ENCODE measurements at regions of chr11 and their contacts with region 1.

Region 1: GRCh38 chr11:62081378-62082291 is 42.2 kb upstream of the INCENP start:
- DNase-seq: peak; percentile 74
- H3K4me3 ChIP-seq: no peak overlapping the region
- H3K27ac ChIP-seq: no peak overlapping the region
- H3K4me1 ChIP-seq: peaks cover 6% of the 10 kb centered on the region
- H3K27me3 ChIP-seq: no peaks in the 10 kb centered on the region
- CTCF ChIP-seq: peak; percentile 97

Region 2: GRCh38 chr11:61899146-61899841 is 182.3 kb before region 1 on chr11:
- CTCF ChIA-PET with region 1: interaction called, 82 read pairs
- POLR2A ChIA-PET with region 1: no interaction called
- intact Hi-C with region 1: loop called (anchors 1 kb)
- DNase-seq: peak; percentile 91
- H3K4me3 ChIP-seq: no peak overlapping the region
- H3K27ac ChIP-seq: peak overlapping the region; percentile 48
- H3K4me1 ChIP-seq: peaks cover 5% of the 10 kb centered on the region
- H3K27me3 ChIP-seq: no peaks in the 10 kb centered on the region
- CTCF ChIP-seq: peak; percentile 100

Region 3: DNA sequence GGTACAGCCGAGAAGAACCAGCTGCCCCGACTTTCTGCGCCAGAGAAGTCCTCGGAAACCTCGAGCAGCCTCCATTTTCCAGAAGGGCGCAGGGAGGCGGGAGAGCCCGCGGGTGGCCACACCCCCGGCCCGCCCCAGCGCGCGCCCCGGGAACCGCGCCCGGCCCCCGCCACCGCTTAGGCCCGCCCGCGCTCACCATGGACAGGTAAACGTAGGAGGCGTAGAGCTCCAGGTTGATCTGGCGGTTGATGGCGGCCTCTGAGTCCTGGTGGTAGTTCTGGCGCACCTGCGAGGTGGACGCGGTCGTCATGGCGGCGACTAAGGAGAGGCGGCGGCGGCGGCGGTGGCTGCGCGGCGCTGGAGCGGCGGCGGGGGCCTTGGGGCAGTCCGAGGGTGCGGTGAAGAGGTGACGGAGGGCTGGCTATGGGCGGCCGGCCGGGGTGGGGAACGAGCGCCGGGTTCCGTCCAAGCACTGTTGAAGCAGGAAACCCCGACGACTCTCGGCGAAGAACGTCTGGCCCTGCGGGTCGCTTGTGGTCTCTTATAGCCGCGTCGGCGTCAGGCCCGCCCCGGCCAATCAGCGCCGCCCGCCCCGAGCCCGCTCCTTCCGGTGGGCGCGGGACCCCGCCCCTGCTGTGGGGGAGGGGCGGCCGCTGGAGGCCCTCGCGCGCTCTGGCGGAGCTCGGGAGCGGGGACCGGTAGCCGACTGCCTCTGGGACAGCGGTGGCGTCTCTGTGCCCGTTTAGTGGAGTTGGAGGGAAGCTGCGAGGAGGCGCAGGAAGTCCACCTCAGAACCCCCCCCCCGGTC is 114.3 kb before region 1 on chr11 and contains the start of gene FTH1:
- CTCF ChIA-PET with region 1: interaction called, 6 read pairs
- POLR2A ChIA-PET with region 1: no interaction called
- intact Hi-C with region 1: loop called (anchors 5 kb)
- DNase-seq: peak; percentile 96
- H3K4me3 ChIP-seq: peak within 1 kb of the TSS; percentile 90
- H3K27ac ChIP-seq: peak within 1 kb of the TSS; percentile 98
- H3K4me1 ChIP-seq: peaks cover 52% of the 10 kb centered on the region
- H3K27me3 ChIP-seq: no peaks in the 10 kb centered on the region
- CTCF ChIP-seq: no peak
- total RNA-seq, gene FTH1: 2,291 and 2,484 TPM in 2 replicates

Region 4: DNA sequence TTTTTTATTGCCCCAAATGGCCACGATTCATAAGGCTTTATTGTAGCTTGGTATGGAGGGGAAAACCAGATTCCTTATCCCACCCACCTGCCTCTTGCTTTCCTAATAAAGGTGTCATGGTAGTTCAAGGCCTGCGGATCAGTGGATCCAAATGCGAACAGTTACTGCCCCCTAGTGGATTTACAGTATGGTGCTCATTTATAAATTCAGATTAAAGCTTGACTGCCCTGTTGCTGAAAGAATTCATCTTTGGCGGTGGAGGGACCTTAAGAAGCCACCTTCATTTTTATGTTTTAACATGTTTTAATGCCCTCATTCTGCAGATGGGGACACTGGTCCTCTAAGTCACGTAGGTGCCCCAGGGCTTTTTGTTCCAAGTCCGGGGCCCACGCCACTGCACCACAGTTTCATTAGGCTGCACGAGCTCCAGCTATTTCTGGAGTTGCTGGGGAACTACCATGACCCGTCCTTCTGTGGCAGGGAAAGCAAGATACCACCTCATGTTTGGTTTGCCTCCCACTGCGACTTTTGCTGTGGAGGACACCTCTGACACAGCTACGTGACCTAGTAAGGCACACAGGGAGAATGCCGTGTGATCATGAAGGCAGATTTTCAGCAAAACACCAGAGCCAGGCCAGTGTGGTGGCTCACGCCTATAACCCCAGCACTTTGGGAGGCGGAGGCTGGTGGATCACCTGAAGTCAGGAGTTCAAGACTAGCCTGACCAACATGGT is 26.5 kb after region 1 on chr11:
- CTCF ChIA-PET with region 1: interaction called, 10 read pairs
- POLR2A ChIA-PET with region 1: interaction called, 3 read pairs
- intact Hi-C with region 1: no loop called
- DNase-seq: peak; percentile 84
- H3K4me3 ChIP-seq: no peak overlapping the region
- H3K27ac ChIP-seq: no peak overlapping the region
- H3K4me1 ChIP-seq: peaks cover 3% of the 10 kb centered on the region
- H3K27me3 ChIP-seq: no peaks in the 10 kb centered on the region
- CTCF ChIP-seq: peak; percentile 91

Region 5: GRCh38 chr11:62542750-62543567 is 461.3 kb after region 1 on chr11:
- CTCF ChIA-PET with region 1: no interaction called
- POLR2A ChIA-PET with region 1: no interaction called
- intact Hi-C with region 1: no loop called
- DNase-seq: peak; percentile 89
- H3K4me3 ChIP-seq: peak overlapping the region; percentile 66
- H3K27ac ChIP-seq: peak overlapping the region; percentile 32
- H3K4me1 ChIP-seq: peaks cover 68% of the 10 kb centered on the region
- H3K27me3 ChIP-seq: no peaks in the 10 kb centered on the region
- CTCF ChIP-seq: peak; percentile 99